Common myeloid progenitor, CD34-positive (primary cell): ENCODE measurements at regions of chr1 and their contacts with region 1.

Region 1: GRCh38 chr1:235266325-235266724 is 61.7 kb downstream of the ARID4B start:
- DNase-seq: peak in 1 of 3 donors; percentile 27
- H3K4me3 ChIP-seq: peak overlapping the region in 2 of 7 experiments; percentile 19 to 27
- H3K27ac ChIP-seq: peak overlapping the region; percentile 6 to 66
- H3K4me1 ChIP-seq: peaks cover 7 to 46% (median 19%) of the 10 kb centered on the region in 4 experiments
- H3K27me3 ChIP-seq: no peaks in the 10 kb centered on the region

Region 2: DNA sequence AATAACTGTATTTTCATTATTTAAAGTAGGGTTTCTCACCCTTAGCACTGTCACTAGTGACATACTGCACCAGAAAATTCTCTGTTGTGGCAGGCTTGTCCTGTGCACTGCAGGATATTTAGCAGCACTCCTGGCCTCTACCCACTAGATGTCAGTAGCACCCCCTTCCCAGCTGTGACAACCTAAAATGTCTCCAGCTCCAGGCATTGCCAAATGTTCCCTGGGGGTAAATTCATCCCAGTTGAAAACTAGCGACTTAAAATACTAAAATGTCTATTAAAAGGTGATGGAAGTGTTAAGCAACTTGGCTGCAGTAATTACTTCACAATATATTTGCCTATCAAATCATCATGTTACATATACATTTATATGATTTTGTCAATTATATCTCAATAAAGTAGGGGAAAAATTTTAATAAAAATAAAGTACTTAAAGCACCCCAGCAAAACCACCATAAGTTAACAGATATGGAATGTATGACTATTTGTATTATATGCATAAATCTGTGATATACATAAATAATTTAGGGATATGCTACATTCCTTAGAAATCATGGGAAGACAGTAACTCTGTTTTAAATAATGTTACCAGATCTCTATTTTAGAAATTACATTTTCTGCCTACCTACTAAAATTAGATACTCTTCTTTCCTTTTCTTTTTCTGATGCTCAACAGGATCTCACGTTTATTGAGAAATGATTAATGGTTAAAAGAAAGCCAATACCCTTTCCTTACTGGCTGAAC is 12.9 kb before region 1 on chr1:
- CTCF ChIA-PET with region 1: interaction called, 13 read pairs
- POLR2A ChIA-PET with region 1: interaction called, 3 read pairs
- DNase-seq: peak; percentile 72 to 79 (median 75)
- H3K4me3 ChIP-seq: no peak overlapping the region
- H3K27ac ChIP-seq: no peak overlapping the region
- H3K4me1 ChIP-seq: peaks cover 0 to 5% (median under 1%) of the 10 kb centered on the region in 4 experiments
- H3K27me3 ChIP-seq: no peaks in the 10 kb centered on the region